ENCODE measurements at regions of chr14 and their contacts with region 1.

Region 1: GRCh38 chr14:103385152-103385993 is at the start of gene MARK3:
- DNase-seq: peak; percentile 99
- ATAC-seq: peak; percentile 97 to 98
- total RNA-seq, gene MARK3: 68.7 to 81.7 TPM

Region 2: GRCh38 chr14:102786768-102787167 is 598.6 kb before region 1 on chr14:
- intact Hi-C with region 1: no loop called
- DNase-seq: no peak
- ATAC-seq: no peak

Region 3: GRCh38 chr14:103333754-103334643 is 51.4 kb before region 1 on chr14 and contains the start of gene EIF5:
- intact Hi-C with region 1: loop called in 1 of 2 experiments (anchors 10 kb)
- DNase-seq: peak; percentile 99
- ATAC-seq: peak; percentile 95 to 96
- total RNA-seq, gene EIF5: 246 to 287 TPM

Region 4: DNA sequence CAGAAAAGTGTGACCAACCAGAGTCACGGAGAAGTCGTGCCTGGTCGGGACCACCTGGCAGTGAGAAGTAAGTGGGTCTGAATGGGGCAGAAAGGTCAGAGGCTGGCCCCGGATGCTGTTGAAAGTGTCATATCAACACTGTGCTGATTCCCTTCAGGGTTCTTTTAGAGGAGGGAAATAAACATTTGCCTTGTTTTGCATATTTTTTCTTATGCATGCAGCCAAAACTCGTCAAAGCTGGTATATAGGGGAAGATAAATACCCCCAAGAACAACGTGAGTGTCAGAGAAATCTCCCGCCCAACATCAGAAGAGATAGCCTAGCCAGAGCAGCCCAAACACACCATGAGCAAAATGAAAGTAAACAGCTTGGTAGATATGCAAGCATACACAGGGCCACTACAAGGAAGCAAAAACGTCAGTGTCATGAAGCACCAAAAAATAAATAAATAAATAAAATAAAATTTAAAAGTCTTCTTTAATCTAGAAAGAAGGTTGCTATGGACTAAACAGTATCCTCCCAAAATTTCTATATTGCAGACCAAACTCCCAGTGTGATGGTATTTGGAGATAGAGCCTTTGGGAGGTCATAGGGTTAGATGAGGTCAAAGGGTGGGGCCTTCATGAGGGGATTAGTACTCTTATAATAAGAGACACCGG is 29.2 kb before region 1 on chr14:
- intact Hi-C with region 1: no loop called
- DNase-seq: no peak
- ATAC-seq: peak; percentile 41 to 76

Region 5: DNA sequence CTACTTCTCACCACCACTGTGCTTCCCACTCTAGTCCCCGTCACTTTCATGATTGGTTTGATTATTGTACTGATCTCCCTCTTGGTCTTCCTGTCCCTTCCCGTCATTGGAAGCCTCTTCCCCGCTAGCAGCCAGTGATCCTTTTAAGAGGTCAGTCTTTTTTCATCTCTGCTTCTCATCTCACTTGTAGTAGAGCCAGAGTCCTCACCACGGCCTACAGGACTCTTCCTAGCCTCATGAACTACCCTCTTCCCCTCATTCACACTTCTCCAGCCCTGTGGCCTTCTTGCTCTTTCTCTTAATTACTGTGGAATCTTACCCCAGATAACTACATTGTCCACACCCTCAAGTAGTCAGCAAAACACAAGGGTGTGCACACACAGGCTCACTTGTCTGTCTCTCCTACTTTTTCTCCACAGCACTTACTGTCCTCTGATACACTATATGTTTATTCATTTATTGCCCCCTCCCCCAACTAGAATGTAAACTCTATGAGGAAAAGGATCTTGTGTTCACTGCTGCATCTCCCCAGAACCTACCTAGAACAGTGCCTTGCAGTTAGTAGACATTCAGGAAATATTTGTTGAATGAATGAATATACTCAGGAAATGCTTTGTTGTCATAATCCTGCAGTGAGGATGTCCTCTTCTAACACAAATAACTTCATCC is 70.9 kb after region 1 on chr14:
- intact Hi-C with region 1: loop called in 1 of 2 experiments (anchors 10 kb)
- DNase-seq: no peak
- ATAC-seq: peak in 1 of 2 donors; percentile 14